Activated B cell treated with CpG ODN at 0.5 μM for 24 hours (primary cell): ENCODE measurements at regions of chr1 and their contacts with region 1.

Region 1: GRCh38 chr1:167220537-167221125 is at the start of gene POU2F1:
- DNase-seq: peak; percentile 97
- ATAC-seq: peak; percentile 70
- H3K4me3 Mint-ChIP-seq: peak within 1 kb of the TSS; percentile 93
- H3K27ac Mint-ChIP-seq: peak within 1 kb of the TSS; percentile 89
- H3K4me1 Mint-ChIP-seq: peaks cover 37% of the 10 kb centered on the region
- H3K27me3 Mint-ChIP-seq: no peaks in the 10 kb centered on the region
- CTCF ChIP-seq: no peak
- total RNA-seq, gene POU2F1: 30.5 and 35.5 TPM in 2 replicates

Region 2: DNA sequence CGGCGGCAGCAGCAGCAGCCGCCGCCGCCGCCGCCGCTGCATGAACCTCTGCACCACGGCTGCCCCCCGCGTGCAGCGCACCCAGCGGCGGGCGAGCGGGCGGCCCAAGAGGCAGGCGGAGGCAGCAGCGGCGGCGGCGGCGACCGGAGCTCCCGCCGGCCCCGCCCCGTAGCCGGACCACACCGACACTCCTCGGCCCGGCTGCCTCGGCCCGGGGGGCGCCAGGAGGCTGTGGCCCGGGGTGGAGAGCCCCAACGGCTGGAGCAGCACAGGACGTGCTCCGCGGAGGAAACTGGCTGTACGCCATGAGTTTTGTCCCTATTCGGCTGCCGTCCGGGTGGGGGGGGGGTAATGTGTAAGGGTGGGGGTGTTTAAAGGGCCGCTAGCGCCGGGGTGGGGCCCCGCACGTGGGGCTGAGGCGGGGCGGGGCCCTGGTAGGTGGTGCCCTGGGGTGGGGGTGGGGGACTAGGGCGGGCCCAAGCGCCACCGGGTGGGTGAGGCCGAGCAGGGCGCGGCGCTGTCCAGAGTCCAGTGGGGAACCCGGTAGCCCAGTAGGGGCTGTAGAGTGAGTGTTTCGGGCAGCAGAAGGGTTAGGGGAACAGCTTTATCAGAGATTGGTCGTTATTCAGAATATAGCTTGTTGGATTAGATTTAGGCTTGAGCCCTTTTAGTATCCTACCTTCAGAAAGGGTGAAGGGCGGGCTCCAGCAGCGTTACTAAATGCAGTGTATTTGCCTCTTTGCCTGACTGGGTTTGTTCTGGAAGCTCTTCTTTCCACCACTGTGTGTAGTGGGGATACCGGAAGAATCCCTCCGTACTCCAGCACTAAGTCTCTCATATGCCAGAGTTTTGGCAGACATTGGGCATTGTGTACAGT is 1053.7 kb before region 1 on chr1 and contains the start of gene FAM78B:
- CTCF ChIA-PET with region 1: no interaction called
- POLR2A ChIA-PET with region 1: no interaction called
- intact Hi-C with region 1: loop called (anchors 5 kb)
- DNase-seq: peak; percentile 55
- ATAC-seq: peak; percentile 84
- H3K4me3 Mint-ChIP-seq: peak within 1 kb of the TSS; percentile 77
- H3K27ac Mint-ChIP-seq: no peak within 1 kb of the TSS
- H3K4me1 Mint-ChIP-seq: peaks cover 19% of the 10 kb centered on the region
- H3K27me3 Mint-ChIP-seq: peaks cover 25% of the 10 kb centered on the region
- CTCF ChIP-seq: no peak
- total RNA-seq, gene FAM78B: 0.64 and 1.00 TPM in 2 replicates

Region 3: DNA sequence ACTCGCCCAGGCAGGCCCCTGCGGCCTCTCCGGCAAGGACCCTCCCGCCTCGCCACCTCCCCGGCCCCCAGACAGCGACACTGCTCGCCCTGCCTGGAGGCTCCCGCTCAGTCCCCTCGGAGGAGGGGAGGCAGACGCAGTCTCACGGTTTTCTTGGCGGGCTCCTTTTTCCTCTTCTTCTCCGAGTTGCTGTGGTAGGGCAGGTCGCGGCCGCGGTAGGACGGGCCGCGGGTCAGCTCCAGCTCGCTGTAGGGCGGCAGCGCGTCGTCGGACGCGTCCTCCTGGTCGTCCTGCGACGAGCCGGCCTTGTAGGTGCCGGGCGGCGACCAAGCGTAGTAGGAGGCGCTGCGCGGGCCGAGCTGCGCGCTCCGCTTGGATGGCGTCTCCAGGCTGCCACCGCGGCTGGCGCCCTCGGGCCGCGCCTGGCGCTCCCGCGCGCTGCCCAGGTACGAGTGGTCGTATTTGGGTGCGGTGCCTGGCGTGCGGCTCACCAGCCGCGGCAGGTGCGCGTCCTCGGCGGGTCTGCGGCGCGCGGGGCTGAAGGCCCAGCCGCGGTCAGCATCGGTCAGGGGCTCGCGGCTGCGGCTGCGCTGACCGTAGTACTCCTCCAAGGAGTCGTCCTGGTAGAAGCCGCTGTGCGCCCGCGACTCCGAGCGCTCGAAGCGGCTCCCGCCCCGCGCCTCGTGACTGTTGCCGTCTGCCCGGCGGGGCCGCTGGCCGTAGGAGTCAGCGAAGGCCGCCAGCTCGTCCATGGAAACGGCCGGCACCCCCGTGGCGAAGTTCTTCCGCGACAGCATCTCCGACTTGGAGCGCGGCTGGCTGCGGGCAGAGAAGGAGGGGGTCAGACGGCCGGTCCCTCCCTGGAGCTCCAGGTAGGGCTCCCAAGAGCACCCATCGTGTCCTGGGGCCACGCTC is 299.8 kb before region 1 on chr1:
- CTCF ChIA-PET with region 1: no interaction called
- POLR2A ChIA-PET with region 1: interaction called, 3 read pairs
- intact Hi-C with region 1: loop called (anchors 5 kb)
- DNase-seq: peak; percentile 37
- ATAC-seq: peak; percentile 23
- H3K4me3 Mint-ChIP-seq: peak overlapping the region; percentile 82
- H3K27ac Mint-ChIP-seq: no peak overlapping the region
- H3K4me1 Mint-ChIP-seq: peaks cover 34% of the 10 kb centered on the region
- H3K27me3 Mint-ChIP-seq: peaks cover 26% of the 10 kb centered on the region
- CTCF ChIP-seq: no peak

Region 4: GRCh38 chr1:166980818-166981217 is 239.8 kb before region 1 on chr1:
- CTCF ChIA-PET with region 1: no interaction called
- POLR2A ChIA-PET with region 1: no interaction called
- intact Hi-C with region 1: no loop called
- DNase-seq: no peak
- ATAC-seq: no peak
- H3K4me3 Mint-ChIP-seq: no peak overlapping the region
- H3K27ac Mint-ChIP-seq: no peak overlapping the region
- H3K4me1 Mint-ChIP-seq: peaks cover 8% of the 10 kb centered on the region
- H3K27me3 Mint-ChIP-seq: peaks cover 19% of the 10 kb centered on the region
- CTCF ChIP-seq: no peak

Region 5: DNA sequence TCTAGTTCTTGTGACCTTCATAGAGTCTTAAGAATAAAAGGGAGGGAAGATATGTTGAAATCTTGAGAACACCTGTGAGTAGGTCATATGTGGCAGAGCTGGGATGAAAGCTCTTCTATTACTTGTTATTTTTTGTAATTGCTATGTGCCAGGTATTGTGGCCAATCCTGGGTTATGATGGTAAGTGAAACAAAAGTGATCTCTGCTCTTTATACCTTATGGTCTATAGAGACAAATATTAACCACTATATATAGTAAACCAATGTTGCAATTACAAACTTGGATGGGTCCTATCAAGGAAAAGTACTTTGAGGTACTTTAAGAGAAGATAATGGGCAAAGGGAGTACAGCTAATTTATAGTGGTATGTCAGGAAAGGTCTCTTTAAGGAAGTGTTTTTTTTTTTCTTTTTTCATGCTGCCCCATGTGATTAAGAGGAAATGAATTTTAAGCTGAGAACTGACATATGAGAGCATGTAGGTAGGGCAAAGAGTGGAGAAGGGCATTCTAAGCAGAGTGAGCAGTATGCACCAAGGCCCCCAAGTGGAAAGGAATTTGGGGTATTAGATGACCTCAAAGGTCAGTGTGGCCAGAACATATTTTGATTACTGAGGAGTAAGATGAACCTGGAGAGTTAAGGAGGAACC is 43.3 kb after region 1 on chr1:
- CTCF ChIA-PET with region 1: interaction called, 4 read pairs
- POLR2A ChIA-PET with region 1: interaction called, 24 read pairs
- intact Hi-C with region 1: loop called (anchors 1 kb)
- DNase-seq: no peak
- ATAC-seq: peak; percentile 43
- H3K4me3 Mint-ChIP-seq: no peak overlapping the region
- H3K27ac Mint-ChIP-seq: no peak overlapping the region
- H3K4me1 Mint-ChIP-seq: peaks cover 12% of the 10 kb centered on the region
- H3K27me3 Mint-ChIP-seq: no peaks in the 10 kb centered on the region
- CTCF ChIP-seq: no peak

Region 6: GRCh38 chr1:167442124-167442848 is 221.7 kb after region 1 on chr1:
- CTCF ChIA-PET with region 1: interaction called, 5 read pairs
- POLR2A ChIA-PET with region 1: interaction called, 4 read pairs
- intact Hi-C with region 1: loop called (anchors 2 kb)
- DNase-seq: peak; percentile 75
- ATAC-seq: peak; percentile 92
- H3K4me3 Mint-ChIP-seq: no peak overlapping the region
- H3K27ac Mint-ChIP-seq: no peak overlapping the region
- H3K4me1 Mint-ChIP-seq: peaks cover 35% of the 10 kb centered on the region
- H3K27me3 Mint-ChIP-seq: no peaks in the 10 kb centered on the region
- CTCF ChIP-seq: no peak

Region 7: DNA sequence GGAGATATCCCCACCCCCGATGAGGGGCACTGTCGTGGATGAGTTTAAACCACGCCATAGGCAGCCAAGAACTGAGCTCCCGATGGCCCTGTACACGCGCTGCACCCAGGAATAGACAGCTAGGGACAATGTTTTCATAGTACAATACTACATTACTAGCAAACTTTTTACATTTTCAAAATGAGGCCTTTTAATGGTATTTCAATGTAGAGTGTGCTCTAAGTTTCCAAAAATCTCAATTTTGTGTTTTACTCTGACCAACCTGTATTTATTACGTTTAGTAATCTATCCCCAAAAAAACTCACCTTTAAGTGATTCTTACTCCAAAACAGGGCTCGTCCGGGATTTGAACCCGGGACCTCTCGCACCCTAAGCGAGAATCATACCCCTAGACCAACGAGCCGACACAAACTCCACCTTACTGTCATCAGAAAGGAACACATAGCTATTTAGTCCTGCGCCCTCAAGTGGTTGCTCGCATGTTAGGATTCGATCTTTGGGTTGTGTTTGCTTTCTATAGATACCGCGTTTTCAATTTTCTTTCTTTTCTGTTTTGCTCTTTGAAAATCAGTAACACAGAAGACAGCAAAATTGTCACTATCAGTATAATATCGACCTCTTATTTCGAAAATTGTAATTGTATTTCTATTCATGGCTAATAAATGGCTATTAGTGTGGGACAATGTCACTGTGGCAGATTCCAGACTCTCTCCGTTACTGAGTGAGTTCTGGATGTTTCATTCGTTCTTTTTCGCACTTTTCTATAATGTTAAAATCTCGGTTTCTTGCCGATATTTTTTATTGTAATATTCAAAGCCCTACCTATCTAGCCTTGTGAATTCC is 494.7 kb after region 1 on chr1:
- CTCF ChIA-PET with region 1: no interaction called
- POLR2A ChIA-PET with region 1: interaction called, 7 read pairs
- intact Hi-C with region 1: loop called (anchors 2 kb)
- DNase-seq: peak; percentile 69
- ATAC-seq: peak; percentile 51
- H3K4me3 Mint-ChIP-seq: peak overlapping the region; percentile 85
- H3K27ac Mint-ChIP-seq: peak overlapping the region; percentile 98
- H3K4me1 Mint-ChIP-seq: peaks cover 68% of the 10 kb centered on the region
- H3K27me3 Mint-ChIP-seq: peaks cover 7% of the 10 kb centered on the region
- CTCF ChIP-seq: peak; percentile 68